HEK293T (cell line): ENCODE measurements at regions of chr12 and their contacts with region 1.

Region 1: DNA sequence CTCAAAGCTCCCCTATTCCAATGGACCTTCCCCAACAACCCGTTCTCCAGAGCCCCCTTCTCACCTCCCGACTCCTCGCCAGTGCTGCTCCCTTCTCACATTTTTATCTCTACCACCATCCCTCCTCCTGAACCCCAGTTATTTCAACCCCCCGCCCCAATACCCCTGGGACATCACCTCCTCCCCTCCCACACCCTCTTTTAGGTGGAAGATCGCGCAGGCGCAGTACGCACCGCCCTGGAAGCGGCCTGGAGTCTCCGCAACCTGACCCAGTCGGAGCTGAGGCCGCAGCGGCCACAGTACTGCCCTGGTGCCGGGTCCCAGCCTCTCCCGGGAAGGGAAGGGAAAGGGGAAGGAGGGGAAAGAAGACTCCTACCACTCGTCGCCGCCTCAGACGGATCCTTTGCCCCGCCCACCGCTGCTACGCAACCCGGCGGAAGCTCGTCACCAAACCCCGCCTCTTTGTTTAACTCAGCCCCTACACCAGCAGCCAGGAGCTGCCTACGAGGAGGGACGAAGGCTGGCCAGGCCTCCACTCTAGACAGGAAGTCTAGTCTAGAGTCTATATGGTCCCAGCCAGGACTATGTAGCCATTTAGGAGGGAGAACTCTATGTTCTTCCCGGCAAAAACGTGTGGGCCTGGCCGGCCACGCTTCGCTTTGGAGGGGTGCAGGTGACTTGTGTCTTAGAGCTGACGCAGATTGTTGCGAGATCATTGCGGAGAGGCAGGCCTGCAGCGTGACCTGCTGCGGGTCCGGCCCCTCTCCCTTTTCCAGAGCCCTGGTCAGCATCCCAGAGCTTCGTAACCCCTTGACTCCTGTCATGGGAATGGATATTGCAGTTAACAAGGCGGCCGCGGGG is at the start of gene RNF41:
- DNase-seq: peak; percentile 95

Region 2: DNA sequence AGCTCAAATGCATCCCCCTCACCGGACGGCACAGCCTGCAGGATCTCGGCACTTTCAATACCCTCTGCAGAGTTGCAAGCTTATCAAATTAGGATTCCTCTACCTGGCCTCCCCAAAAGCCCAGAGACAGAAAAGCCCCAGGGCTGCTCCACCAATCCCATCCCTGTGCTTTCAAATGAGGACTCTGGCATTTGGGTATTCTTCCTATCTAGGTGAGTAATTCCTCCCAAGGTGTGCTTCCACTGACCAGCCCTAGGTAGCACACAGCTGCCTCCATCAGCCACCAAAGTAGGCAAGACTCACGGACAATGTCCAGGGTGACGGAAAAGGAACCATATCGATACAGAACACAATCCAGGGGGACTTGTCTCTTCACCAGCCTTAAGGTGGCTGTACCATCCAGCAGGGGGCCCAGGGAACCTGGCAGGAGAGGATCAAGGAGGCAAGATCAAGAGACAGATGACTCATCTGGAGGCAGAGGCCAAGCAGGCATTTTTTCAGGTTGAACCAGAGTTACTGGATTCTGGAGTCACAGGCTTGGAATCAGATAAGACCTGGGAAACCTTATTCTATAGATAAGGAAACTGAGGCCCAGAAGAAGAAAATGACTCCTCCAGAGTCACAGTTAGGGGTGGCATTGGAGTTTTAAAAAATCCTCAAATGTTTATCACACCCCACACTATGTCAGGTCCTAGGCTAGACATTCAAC is 265.8 kb before region 1 on chr12:
- CTCF ChIA-PET with region 1: no interaction called
- POLR2A ChIA-PET with region 1: no interaction called
- DNase-seq: no peak

Region 3: GRCh38 chr12:56007564-56008559 is 213.9 kb before region 1 on chr12:
- CTCF ChIA-PET with region 1: no interaction called
- POLR2A ChIA-PET with region 1: no interaction called
- DNase-seq: peak; percentile 75

Region 4: DNA sequence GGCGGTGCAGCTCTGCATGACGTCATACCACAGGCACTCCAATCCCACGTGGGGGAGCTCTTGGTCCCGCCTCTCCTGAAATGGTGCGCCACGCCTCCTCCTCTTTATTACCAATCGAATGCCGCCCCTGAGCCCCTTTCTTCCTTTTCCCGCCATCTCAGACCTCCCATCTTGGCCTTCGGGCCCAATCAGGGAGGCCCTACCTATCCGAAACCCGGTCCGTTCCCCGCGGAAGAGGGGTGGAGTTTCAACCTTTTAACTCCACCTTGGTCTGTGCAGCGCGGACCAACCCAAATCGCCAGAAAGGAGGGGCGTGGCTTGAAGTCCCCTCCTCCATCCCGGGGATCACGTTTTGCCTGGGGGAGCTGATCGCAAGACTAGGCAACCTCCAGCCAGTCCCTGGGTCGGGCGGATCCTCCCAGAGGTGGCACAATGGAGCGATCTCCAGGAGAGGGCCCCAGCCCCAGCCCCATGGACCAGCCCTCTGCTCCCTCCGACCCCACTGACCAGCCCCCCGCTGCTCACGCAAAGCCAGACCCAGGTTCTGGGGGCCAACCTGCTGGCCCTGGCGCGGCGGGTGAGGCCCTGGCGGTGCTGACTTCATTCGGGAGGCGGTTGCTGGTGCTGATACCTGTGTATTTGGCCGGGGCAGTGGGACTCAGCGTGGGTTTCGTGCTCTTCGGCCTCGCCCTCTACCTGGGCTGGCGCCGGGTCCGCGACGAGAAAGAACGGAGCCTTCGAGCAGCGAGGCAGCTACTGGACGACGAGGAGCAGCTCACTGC is 93.7 kb before region 1 on chr12 and contains the start of gene ESYT1:
- CTCF ChIA-PET with region 1: interaction called, 3 read pairs
- POLR2A ChIA-PET with region 1: interaction called, 23 read pairs
- DNase-seq: peak; percentile 95

Region 5: GRCh38 chr12:56197921-56198635 is 23.7 kb before region 1 on chr12:
- CTCF ChIA-PET with region 1: interaction called, 4 read pairs
- POLR2A ChIA-PET with region 1: interaction called, 21 read pairs
- DNase-seq: no peak

Region 6: GRCh38 chr12:56248688-56249087 is 26.9 kb after region 1 on chr12:
- CTCF ChIA-PET with region 1: interaction called, 3 read pairs
- POLR2A ChIA-PET with region 1: interaction called, 14 read pairs
- DNase-seq: no peak

Region 7: GRCh38 chr12:56266693-56267442 is 45.1 kb after region 1 on chr12 and contains the start of gene COQ10A:
- CTCF ChIA-PET with region 1: no interaction called
- POLR2A ChIA-PET with region 1: interaction called, 15 read pairs
- DNase-seq: peak; percentile 92